GM10248 (cell line): ENCODE measurements at regions of chr17 and their contacts with region 1.

Region 1: GRCh38 chr17:44210342-44211192 is 8.9 kb downstream of the UBTF start:
- DNase-seq: peak; percentile 91
- CTCF ChIP-seq: peak; percentile 100

Region 2: DNA sequence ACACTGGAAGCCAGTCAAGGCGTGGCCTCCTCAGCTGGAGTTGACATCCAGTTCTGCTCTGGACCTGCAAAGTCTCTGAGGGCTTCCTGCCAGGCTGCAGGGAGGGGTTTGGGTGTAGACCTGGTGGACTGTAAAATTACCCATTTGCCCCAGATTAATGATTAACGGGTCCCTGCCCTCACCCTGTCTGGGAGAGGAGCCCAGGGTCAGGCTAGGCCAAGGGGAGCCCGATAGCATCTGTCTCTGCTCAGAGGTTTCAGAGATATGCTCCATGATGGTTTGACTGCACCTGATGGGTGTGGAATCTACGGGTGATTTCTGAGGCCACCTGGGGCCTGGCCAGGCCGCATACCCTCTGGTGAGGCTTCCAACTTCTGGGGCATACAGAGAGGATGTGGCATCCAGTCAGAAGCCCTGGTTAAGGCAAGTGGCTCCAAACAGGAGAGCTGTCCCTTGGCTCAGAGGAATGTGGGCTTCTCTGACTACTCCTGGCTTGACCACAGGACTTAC is 279.4 kb before region 1 on chr17:
- CTCF ChIA-PET with region 1: no interaction called
- POLR2A ChIA-PET with region 1: no interaction called
- DNase-seq: no peak
- CTCF ChIP-seq: no peak

Region 3: DNA sequence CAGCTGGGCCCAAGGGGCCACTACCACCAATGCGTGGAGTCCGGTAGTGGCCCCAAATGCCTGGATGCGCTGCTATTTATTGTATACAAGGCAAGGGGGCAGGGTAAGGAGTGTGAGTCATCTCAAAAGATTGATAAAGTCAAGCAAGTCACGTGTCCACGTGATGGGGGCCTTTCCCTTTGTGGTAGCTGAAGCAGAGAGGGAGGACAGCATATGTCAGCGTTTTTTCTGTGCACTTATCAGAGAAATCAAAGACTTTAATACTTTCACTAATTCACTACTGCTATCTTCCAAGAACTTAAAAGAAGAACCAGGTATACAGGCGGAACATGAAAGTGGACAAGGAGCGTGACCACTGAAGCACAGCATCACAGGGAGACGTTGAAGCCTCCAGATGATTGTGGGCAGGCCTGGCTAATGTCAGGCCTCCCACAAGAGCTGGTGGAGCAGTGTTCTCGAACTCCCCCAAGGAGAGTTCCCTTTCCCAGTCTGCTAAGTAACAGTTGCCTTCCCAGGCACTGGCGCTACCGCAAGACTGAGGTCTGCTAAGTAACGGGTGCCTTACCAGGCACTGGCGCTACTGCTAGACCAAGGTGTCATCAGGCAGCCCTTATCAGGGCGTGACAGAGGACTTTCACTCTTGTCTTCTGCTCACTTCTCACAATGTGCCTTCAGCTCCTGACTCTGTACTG is 50.9 kb before region 1 on chr17:
- CTCF ChIA-PET with region 1: interaction called, 13 read pairs
- POLR2A ChIA-PET with region 1: no interaction called
- DNase-seq: no peak
- CTCF ChIP-seq: no peak

Region 4: DNA sequence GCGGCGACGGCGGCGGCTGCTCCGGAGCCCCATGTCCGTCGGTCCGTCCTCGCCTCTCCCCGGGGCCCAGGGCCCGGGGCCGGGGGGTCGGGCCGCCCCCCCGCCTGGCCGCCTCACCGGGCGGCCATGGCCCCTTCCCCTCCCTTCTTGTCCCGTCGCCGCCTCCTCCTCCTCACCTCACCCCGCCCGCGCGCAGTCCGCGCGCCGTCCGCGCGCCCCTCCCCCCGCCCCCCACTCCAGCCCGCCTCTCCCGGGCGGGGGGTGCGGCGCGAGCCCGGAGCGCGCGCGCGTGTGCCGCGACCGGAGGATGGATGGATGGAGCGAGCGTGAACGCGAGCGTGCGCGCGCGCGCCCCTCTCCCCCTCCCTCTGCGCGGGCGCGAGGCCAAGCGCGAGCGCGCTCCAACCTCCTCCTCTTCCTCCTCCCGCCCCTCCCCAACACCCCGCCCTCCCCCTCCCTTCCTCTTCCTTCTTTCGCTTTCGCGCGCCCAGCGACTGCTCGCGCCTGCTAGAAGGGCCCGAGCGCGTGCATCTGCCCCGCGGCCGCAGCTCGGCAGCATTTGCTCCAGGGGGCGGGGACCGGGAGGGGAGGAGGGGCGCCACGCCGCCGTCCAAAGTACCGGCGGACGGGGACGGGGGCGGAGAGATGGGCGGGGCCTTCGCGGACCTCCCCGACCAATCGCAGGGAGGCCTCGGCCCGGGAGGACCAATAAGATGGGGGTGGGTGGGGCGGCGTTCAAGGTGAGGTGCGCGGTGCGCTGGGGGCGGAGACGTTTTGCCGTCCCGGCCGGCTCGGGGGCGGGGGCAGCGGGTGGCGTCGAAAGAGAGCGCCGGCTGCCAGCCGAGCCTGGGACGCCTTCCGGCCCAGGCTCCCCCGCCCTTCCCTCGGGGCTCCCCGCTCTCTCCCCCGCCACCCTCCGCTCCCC is 10.8 kb before region 1 on chr17 and contains the start of gene ATXN7L3:
- CTCF ChIA-PET with region 1: interaction called, 61 read pairs
- POLR2A ChIA-PET with region 1: interaction called, 3 read pairs
- DNase-seq: peak; percentile 99
- CTCF ChIP-seq: no peak

Region 5: DNA sequence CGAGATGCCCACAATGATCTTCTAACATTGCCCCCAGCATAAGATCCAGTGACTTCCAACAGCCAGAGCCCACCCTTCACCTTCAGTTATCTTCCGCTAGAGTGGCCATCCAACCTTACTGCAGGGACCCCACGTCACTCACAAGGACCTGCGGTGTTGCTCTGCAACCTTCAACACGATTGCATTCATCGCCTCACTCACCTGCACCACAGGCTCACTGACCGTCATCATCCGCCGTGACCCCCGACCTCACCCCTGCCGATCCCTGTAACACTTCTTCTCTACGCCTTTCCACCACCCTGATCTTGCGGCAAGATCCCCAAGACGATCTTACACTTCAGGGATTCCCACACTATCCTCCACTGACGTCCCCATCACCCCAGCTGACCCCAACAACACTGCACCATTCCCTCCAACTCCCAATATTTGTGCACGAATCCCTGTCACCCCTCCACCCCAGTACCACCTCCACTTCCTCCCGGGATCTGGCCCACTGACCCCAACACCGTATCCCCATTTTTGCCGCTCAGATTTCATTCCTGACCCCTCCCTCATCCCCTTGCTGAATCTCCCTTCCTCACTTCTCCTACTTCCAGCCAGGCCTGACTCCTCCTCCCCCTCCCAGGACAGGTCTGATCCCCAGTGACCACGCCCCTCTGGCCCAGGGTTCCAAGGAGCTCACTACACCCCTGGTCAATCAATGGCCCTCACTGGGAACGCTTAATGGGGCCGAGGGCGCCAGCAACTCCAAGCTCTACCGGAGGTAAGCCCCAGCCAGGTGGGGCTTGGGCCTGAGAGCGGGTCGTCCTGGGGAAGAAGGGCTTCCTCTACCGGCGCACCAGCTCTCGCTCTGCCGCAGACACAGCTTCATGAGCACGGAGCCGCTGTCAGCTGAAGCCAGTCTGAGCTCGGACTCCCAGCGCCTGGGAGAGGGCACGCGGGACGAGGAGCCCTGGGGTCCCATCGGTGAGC is 105.5 kb after region 1 on chr17:
- CTCF ChIA-PET with region 1: interaction called, 12 read pairs
- POLR2A ChIA-PET with region 1: interaction called, 3 read pairs
- DNase-seq: no peak
- CTCF ChIP-seq: no peak

Region 6: GRCh38 chr17:44344939-44345453 is 134.4 kb after region 1 on chr17 and contains the start of gene GRN:
- CTCF ChIA-PET with region 1: interaction called, 234 read pairs
- POLR2A ChIA-PET with region 1: interaction called, 3 read pairs
- DNase-seq: peak; percentile 94
- CTCF ChIP-seq: no peak

Region 7: DNA sequence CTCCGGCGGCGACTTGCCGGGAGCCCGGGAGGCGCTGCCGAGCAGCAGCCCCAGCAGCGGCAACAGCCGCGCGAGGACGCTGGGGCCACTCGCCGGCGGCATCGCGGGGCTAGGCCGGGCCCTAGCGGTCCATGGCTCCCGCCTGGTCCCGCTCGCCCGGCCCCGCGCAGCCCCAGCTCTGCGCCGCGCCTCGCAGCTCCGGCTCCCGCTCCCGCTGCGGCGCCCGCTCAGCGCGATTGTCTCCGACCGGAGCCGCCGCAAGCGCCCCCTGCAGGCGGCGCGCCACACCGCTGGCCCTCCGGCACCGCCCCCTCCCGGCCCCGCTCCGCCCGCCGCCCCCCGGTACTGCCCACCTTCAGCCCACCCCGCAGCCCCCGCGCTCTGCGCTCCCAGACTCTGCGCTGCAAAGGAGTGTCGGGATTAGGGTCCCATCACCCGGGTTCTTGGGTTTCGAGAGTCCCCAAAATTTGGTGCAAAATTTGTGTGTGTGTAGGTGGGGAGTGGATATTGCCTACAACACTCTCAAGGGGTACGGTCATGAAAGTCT is 153.1 kb after region 1 on chr17 and contains the start of gene FAM171A2:
- CTCF ChIA-PET with region 1: interaction called, 26 read pairs
- POLR2A ChIA-PET with region 1: no interaction called
- DNase-seq: peak; percentile 90
- CTCF ChIP-seq: peak; percentile 67